ENCODE measurements at regions of chr19 and their contacts with region 1.

Region 1: GRCh38 chr19:1551068-1552040 is 16.8 kb downstream of the MEX3D start:
- DNase-seq: no peak
- H3K4me3 Mint-ChIP-seq: no peak overlapping the region
- H3K27ac Mint-ChIP-seq: no peak overlapping the region
- H3K4me1 Mint-ChIP-seq: no peaks in the 10 kb centered on the region
- H3K27me3 Mint-ChIP-seq: peaks cover 7% of the 10 kb centered on the region

Region 2: GRCh38 chr19:1672038-1672768 is 120.8 kb after region 1 on chr19:
- intact Hi-C with region 1: loop called (anchors 1 kb)
- DNase-seq: peak; percentile 46
- H3K4me3 Mint-ChIP-seq: no peak overlapping the region
- H3K27ac Mint-ChIP-seq: no peak overlapping the region
- H3K4me1 Mint-ChIP-seq: peaks cover 5% of the 10 kb centered on the region
- H3K27me3 Mint-ChIP-seq: peaks cover 48% of the 10 kb centered on the region

Region 3: DNA sequence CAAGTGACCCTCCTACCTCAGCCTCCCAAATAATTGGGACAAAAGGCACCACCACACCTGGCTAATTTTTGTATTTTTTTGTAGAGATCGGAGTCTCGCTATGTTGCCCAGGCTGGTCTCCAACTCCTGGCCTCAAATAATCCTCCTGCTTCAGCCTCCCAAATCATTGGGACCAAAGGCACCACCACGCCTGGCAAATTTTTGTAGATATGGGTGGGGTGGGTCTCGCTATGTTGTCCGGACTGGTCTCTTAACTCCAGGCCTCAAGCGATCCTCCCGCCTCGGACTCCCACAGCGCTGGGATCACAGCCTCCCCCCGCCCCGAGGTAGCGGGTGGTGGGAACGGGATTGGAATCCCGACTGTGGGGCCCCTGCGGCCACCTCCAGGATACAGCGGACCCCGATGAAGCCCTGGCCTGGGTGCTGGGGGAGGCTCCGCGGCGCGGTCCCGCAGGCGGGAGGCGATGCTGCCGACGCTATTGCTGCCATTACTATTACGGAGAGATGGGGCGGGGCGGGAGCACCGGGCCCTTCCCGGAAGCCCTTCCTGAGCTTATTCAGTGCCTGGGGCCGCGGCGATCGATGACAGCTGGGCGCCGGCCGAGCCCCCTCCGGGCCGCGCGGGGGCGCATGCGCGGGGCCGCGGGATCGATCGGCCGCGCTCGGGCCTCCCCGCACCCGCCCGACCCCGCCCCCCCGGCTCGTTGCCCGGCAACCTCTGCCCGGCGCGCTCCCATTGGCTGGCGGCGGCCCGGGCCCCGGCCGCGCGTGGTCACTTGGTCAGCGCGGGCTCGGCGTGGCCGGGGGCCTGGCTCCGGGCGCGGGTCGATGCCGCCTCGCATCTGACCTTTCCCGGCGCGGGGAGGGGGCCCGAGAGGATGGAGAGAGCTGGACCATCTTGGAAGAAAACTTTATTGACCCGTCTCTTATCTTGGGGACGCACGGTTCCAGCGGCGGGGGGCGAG is 174.0 kb after region 1 on chr19:
- intact Hi-C with region 1: no loop called
- DNase-seq: peak; percentile 26
- H3K4me3 Mint-ChIP-seq: peak overlapping the region; percentile 59
- H3K27ac Mint-ChIP-seq: no peak overlapping the region
- H3K4me1 Mint-ChIP-seq: peaks cover 5% of the 10 kb centered on the region
- H3K27me3 Mint-ChIP-seq: peaks cover 34% of the 10 kb centered on the region

Region 4: DNA sequence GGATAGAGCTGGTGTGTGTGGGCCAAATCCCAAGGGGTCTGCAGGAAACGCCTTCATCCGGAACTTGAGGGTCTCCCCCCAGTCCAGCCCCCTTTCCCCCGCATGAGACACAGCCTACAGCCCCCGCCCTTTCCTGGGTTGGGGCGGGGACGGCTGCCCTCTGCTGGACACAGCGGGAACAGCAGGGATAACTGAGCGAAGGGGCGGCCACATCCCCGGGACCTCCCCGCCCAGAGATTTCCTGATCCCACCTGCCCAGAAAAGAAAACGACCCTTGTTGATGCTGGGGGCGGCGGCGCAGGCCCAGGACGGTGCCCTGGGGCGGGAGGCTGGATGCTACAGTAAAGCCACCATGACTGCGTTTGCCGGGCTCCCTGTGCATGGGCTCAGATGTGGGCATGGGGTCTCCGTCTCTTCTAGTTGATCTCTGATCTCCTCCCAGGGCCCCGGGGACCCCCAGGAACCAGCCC is 216.1 kb after region 1 on chr19:
- intact Hi-C with region 1: loop called (anchors 1 kb)
- DNase-seq: peak; percentile 42
- H3K4me3 Mint-ChIP-seq: no peak overlapping the region
- H3K27ac Mint-ChIP-seq: no peak overlapping the region
- H3K4me1 Mint-ChIP-seq: no peaks in the 10 kb centered on the region
- H3K27me3 Mint-ChIP-seq: peaks cover 66% of the 10 kb centered on the region

Measured in activated T-helper 1 cell treated with anti-CD3 and anti-CD28 coated beads, Interleukin-12 subunit alpha, Interleukin-12 subunit beta, Interleukin-2, Interleukin-4 antibody, amounts not matched to agents 30 ng/mL and 10 ng/mL and 1 ng/mL, durations not matched to agents 14 hours and 24 hours and 36 hours (primary cell).